CD4-positive, alpha-beta T cell (primary cell): ENCODE measurements at regions of chr2 and their contacts with region 1.

Region 1: DNA sequence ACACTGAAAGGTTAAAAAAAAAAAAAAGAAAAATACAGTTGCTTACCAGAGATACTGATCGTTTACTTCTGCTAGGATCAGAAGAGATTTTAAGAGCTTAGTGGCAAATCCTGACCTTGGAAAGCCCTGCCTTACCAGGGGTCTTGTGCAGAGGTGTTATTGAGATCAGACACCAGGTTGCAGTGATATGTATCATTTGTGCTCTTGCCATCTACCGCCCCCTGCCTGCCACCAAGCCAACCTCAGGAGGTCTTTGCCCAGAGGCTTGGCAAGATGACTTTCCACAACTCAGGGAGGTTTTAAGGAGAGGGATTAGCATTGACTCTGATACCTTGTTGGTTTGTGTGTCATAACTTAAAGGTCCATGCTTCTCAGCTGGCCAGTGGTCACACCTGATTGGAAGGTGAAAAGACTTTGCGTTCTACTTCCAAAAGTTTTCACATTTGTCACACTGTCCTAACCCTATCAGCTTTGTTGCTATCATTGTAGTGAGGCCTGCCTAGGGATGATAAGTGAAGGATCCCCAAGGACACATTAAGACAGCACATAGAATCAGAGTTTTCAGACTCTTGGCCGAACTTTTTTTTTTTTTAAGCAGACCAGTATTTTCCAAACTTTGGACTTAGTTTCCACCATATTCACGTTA is 46.2 kb upstream of the MGAT5 start:
- DNase-seq: peak; percentile 49 to 83 (median 61)
- ATAC-seq: peak; percentile 93
- H3K4me3 ChIP-seq: no peak overlapping the region
- H3K4me3 Mint-ChIP-seq: no peak overlapping the region
- H3K27ac ChIP-seq: no peak overlapping the region
- H3K27ac Mint-ChIP-seq: no peak overlapping the region
- H3K4me1 ChIP-seq: peaks cover 35% of the 10 kb centered on the region
- H3K4me1 Mint-ChIP-seq: peaks cover 5% of the 10 kb centered on the region
- H3K27me3 ChIP-seq: no peaks in the 10 kb centered on the region
- H3K27me3 Mint-ChIP-seq: no peaks in the 10 kb centered on the region
- CTCF ChIP-seq: peak; percentile 64

Region 2: GRCh38 chr2:133886735-133887660 is 320.7 kb before region 1 on chr2:
- CTCF ChIA-PET with region 1: interaction called, 4 read pairs
- POLR2A ChIA-PET with region 1: no interaction called
- intact Hi-C with region 1: loop called (anchors 5 kb)
- DNase-seq: peak; percentile 14 to 68 (median 36)
- ATAC-seq: no peak
- H3K4me3 ChIP-seq: no peak overlapping the region
- H3K4me3 Mint-ChIP-seq: no peak overlapping the region
- H3K27ac ChIP-seq: no peak overlapping the region
- H3K27ac Mint-ChIP-seq: no peak overlapping the region
- H3K4me1 ChIP-seq: peaks cover 4% of the 10 kb centered on the region
- H3K4me1 Mint-ChIP-seq: no peaks in the 10 kb centered on the region
- H3K27me3 ChIP-seq: no peaks in the 10 kb centered on the region
- H3K27me3 Mint-ChIP-seq: peaks cover 23% of the 10 kb centered on the region
- CTCF ChIP-seq: peak; percentile 54

Region 3: DNA sequence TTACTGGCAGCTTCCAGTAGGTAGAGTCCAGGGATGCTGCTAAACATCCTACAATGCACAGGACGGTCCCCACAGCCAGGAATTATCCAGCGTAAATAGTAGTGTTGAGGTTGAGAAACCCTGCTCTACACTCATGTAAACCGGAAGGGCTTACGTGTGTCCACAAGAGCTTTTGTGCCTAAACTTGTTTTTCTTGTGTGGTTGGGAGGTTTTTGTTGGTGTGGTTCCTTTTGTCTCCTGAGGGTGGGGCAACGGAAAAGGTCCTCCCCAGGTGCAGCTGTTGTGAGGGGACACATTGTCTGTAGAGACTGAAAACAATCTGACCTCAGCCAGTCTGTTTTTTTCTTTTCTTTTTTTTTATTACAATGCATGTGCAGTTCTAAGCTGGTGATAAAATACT is 26.5 kb before region 1 on chr2:
- CTCF ChIA-PET with region 1: interaction called, 4 read pairs
- POLR2A ChIA-PET with region 1: interaction called, 13 read pairs
- intact Hi-C with region 1: no loop called
- DNase-seq: peak in 13 of 14 experiments; percentile 38 to 86 (median 51)
- ATAC-seq: peak; percentile 81
- H3K4me3 ChIP-seq: no peak overlapping the region
- H3K4me3 Mint-ChIP-seq: peak overlapping the region; percentile 52
- H3K27ac ChIP-seq: peak overlapping the region in 1 of 2 donors; percentile 48
- H3K27ac Mint-ChIP-seq: peak overlapping the region; percentile 84
- H3K4me1 ChIP-seq: peaks cover 74% of the 10 kb centered on the region
- H3K4me1 Mint-ChIP-seq: peaks cover 96% of the 10 kb centered on the region
- H3K27me3 ChIP-seq: no peaks in the 10 kb centered on the region
- H3K27me3 Mint-ChIP-seq: no peaks in the 10 kb centered on the region
- CTCF ChIP-seq: peak; percentile 22

Region 4: DNA sequence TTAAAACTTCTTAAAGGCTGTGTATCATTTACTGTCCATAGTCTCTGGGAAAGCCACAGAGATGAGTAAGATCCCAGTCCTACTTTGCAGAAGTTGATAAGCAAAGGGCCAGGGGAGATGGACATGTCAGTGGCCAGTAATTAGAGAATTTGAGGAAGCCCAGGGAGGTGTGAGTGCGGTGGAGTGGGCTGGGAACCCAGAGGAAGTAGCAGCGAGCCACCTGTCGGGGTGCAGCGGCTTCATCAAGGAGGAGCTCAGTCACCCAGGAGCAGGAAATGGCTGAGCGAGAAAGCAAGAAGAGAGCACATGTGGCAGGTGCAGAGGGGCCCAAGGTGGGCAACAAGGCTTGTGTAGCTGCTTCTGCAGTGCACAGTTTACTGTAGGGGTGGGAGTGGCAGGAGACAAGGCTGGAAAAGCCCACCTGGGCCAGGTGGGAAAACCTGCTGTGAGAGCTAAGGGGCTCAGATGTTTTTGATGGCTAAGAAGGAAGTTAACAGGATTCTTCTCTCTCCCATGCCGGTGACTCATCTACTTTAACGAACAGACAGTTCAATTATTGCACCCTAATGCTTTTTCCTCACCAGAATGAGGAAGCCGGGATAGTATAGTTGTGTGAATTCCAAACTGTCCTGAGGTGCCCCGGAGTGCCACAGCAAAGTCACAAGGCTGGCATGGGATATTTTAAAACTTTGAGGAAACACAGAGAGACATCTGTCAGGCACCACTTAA is 11.4 kb after region 1 on chr2:
- CTCF ChIA-PET with region 1: interaction called, 15 read pairs
- POLR2A ChIA-PET with region 1: interaction called, 30 read pairs
- intact Hi-C with region 1: no loop called
- DNase-seq: peak; percentile 12 to 77 (median 40)
- ATAC-seq: peak; percentile 71
- H3K4me3 ChIP-seq: peak overlapping the region; percentile 15
- H3K4me3 Mint-ChIP-seq: peak overlapping the region; percentile 49
- H3K27ac ChIP-seq: peak overlapping the region; percentile 32 to 69
- H3K27ac Mint-ChIP-seq: peak overlapping the region; percentile 87
- H3K4me1 ChIP-seq: peaks cover 50% of the 10 kb centered on the region
- H3K4me1 Mint-ChIP-seq: peaks cover 76% of the 10 kb centered on the region
- H3K27me3 ChIP-seq: no peaks in the 10 kb centered on the region
- H3K27me3 Mint-ChIP-seq: no peaks in the 10 kb centered on the region
- CTCF ChIP-seq: no peak

Region 5: GRCh38 chr2:134411828-134412638 is 204.3 kb after region 1 on chr2:
- CTCF ChIA-PET with region 1: interaction called, 7 read pairs
- POLR2A ChIA-PET with region 1: no interaction called
- intact Hi-C with region 1: loop called (anchors 5 kb)
- DNase-seq: peak; percentile 51 to 84 (median 62)
- ATAC-seq: peak; percentile 97
- H3K4me3 ChIP-seq: no peak overlapping the region
- H3K4me3 Mint-ChIP-seq: no peak overlapping the region
- H3K27ac ChIP-seq: no peak overlapping the region
- H3K27ac Mint-ChIP-seq: no peak overlapping the region
- H3K4me1 ChIP-seq: peaks cover 34% of the 10 kb centered on the region
- H3K4me1 Mint-ChIP-seq: peaks cover 54% of the 10 kb centered on the region
- H3K27me3 ChIP-seq: no peaks in the 10 kb centered on the region
- H3K27me3 Mint-ChIP-seq: no peaks in the 10 kb centered on the region
- CTCF ChIP-seq: peak; percentile 62